Activated CD4-positive, alpha-beta memory T cell treated with anti-CD3 and anti-CD28 coated beads, Interleukin-2, amount 10 ng/mL, durations not matched to agents 7 days and 5 days (primary cell): ENCODE measurements at regions of chr22 and their contacts with region 1.

Region 1: GRCh38 chr22:50341977-50342650 is 1.0 kb upstream of the PPP6R2 start:
- DNase-seq: peak; percentile 89
- H3K4me3 Mint-ChIP-seq: peak overlapping the region; percentile 77
- H3K27ac Mint-ChIP-seq: peak overlapping the region; percentile 88
- H3K4me1 Mint-ChIP-seq: peaks cover 11% of the 10 kb centered on the region
- H3K27me3 Mint-ChIP-seq: no peaks in the 10 kb centered on the region

Region 2: DNA sequence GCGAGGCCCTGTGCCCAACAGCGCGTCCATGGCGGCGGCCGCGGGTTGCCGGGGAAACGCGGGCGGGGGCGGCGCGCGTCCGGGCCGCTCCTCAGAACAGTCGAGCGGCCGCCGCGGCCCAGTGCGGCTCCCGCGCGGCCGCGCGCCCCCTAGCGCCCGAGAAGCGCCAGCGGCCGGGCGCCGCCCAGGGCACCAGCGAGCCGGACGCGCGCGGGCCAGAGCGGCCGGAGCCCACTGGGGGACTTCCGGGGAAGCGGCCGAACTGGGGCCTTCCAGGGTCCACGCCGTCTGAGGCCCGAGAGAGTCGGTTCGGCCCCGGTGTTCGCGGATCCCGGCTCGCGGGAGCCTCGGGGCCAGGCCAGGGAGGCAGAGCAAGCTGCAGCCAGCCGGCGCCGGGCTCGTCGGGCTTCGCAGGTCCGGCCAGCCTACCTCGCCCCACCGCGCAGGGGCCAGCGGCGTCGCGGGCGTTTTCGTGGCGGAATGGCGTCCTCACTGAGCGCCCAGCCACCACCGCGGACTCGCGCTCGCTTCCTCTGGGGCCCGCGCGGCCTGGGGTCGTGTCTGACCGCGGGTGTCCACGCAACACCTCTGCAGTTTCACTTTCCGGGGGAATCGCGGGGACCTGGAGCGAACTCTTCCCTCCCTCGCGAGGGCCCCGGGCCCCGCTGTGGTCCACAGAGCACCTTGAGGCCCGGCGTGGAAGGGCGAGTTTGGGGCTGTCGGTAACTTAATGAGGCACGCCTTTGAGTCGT is 15.0 kb before region 1 on chr22 and contains the start of gene DENND6B:
- CTCF ChIA-PET with region 1: interaction called, 21 read pairs
- POLR2A ChIA-PET with region 1: interaction called, 9 read pairs
- DNase-seq: peak; percentile 75
- H3K4me3 Mint-ChIP-seq: peak within 1 kb of the TSS; percentile 79
- H3K27ac Mint-ChIP-seq: peak within 1 kb of the TSS; percentile 54
- H3K4me1 Mint-ChIP-seq: peaks cover 23% of the 10 kb centered on the region
- H3K27me3 Mint-ChIP-seq: peaks cover 21% of the 10 kb centered on the region
- total RNA-seq, gene DENND6B: 5.0 to 5.6 TPM

Region 3: DNA sequence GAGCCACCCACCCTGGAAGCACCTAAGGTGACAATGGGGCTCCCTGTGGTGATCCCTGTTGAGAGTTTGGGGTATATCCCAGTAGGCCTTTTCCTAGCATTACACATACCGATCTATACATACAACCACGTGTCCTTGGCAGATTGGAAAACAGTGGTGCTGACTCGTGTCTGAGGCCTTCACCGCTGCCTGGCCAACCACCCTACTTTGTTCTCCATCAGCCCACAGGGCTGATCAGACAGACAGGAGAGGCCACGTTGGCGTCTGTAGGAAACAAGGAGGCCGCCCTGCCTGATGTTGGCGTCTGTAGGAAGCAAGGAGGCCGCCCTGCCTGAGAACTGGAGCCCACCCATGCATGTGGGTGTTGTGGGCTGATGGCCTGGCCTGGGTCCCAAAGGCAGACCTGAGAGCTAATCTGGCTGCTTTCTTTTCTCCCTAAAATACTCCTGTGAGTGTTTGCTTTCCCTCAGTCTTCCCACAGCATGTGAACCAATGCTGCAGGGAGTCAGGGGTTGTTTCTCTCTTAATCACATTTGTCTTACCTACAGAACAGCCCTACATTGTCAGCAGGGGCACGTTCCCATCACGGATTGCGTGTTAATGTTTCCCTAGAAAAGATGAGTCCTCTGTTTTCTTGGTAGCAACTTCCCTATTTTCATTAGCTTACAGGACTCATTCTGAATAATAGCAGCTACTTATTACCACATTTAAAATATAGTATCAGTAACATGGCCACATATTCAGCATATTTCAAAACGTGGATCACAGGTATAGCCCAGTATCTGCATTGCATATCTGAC is 75.5 kb after region 1 on chr22:
- CTCF ChIA-PET with region 1: no interaction called
- POLR2A ChIA-PET with region 1: no interaction called
- DNase-seq: no peak
- H3K4me3 Mint-ChIP-seq: no peak overlapping the region
- H3K27ac Mint-ChIP-seq: no peak overlapping the region
- H3K4me1 Mint-ChIP-seq: no peaks in the 10 kb centered on the region
- H3K27me3 Mint-ChIP-seq: no peaks in the 10 kb centered on the region

Region 4: GRCh38 chr22:50691521-50691920 is 349.4 kb after region 1 on chr22:
- CTCF ChIA-PET with region 1: no interaction called
- POLR2A ChIA-PET with region 1: no interaction called
- DNase-seq: peak; percentile 58
- H3K4me3 Mint-ChIP-seq: no peak overlapping the region
- H3K27ac Mint-ChIP-seq: no peak overlapping the region
- H3K4me1 Mint-ChIP-seq: peaks cover 16% of the 10 kb centered on the region
- H3K27me3 Mint-ChIP-seq: peaks cover 16% of the 10 kb centered on the region